ENCODE measurements at regions of chr17 and their contacts with region 1.

Region 1: GRCh38 chr17:40531051-40531991 is 29.9 kb upstream of the TNS4 start:
- DNase-seq: no peak
- H3K4me3 ChIP-seq: no peak overlapping the region
- H3K27ac ChIP-seq: no peak overlapping the region
- H3K4me1 ChIP-seq: peaks cover 28% of the 10 kb centered on the region
- H3K27me3 ChIP-seq: peaks cover 12 to 22% of the 10 kb centered on the region in 2 experiments
- CTCF ChIP-seq: no peak
- POLR2A ChIP-seq: no peak

Region 2: GRCh38 chr17:40303009-40303657 is 228.2 kb before region 1 on chr17:
- CTCF ChIA-PET with region 1: interaction called, 35 read pairs
- POLR2A ChIA-PET with region 1: no interaction called
- dilution Hi-C with region 1: no loop called
- intact Hi-C with region 1: loop called (anchors 5 kb)
- DNase-seq: peak; percentile 85
- H3K4me3 ChIP-seq: no peak overlapping the region
- H3K27ac ChIP-seq: no peak overlapping the region
- H3K4me1 ChIP-seq: peaks cover 19% of the 10 kb centered on the region
- H3K27me3 ChIP-seq: no peaks in the 10 kb centered on the region
- CTCF ChIP-seq: peak; percentile 55 to 66
- POLR2A ChIP-seq: no peak

Region 3: DNA sequence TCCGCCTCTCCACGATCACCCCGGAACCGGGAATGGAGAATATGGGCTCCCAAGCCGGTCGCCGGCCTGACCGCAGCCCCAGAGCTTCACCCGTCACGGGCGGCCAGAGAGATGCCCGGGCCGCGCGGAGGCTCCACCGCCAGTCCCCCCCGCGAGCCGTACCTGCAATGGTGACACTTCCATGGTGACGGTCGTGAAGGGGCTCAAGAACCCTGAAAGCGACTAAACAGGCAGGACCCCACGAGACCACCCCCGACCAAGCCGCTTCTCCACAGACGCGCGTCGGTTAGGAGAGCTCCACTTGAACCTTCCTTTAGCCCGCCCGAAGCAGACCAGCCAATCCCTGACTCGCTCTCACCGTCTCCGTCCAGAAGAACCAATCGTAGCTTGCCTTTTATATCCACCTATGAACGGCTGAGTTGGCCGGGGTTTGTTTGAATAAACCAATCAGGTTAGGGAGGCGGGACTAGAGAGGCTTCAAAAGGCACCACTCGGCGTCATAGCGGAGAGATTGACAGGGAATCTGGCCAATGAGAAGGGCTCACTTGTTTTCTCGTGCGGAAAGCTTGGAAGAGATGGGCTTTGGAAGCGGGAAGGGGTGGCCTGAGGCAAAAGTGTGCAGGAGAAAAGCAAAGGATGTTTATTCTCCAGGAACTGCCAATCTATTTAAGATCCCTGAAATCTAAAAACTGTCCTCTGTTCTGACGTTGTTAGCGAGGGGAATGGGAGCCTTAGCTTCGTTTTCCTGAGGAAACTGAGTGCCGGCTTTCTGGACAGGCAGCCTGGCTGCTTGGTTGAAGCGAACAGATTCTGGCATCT is 113.5 kb before region 1 on chr17 and contains the start of gene TOP2A:
- CTCF ChIA-PET with region 1: interaction called, 91 read pairs
- POLR2A ChIA-PET with region 1: interaction called, 4 read pairs
- dilution Hi-C with region 1: no loop called
- intact Hi-C with region 1: loop called (anchors 1 kb)
- DNase-seq: peak; percentile 100
- H3K4me3 ChIP-seq: peak within 1 kb of the TSS; percentile 72 to 91 (median 73)
- H3K27ac ChIP-seq: peak within 1 kb of the TSS; percentile 6
- H3K4me1 ChIP-seq: peaks cover 25% of the 10 kb centered on the region
- H3K27me3 ChIP-seq: no peaks in the 10 kb centered on the region
- CTCF ChIP-seq: no peak
- POLR2A ChIP-seq: peak; percentile 67
- total RNA-seq, gene TOP2A: 149 and 160 TPM in 2 replicates

Region 4: DNA sequence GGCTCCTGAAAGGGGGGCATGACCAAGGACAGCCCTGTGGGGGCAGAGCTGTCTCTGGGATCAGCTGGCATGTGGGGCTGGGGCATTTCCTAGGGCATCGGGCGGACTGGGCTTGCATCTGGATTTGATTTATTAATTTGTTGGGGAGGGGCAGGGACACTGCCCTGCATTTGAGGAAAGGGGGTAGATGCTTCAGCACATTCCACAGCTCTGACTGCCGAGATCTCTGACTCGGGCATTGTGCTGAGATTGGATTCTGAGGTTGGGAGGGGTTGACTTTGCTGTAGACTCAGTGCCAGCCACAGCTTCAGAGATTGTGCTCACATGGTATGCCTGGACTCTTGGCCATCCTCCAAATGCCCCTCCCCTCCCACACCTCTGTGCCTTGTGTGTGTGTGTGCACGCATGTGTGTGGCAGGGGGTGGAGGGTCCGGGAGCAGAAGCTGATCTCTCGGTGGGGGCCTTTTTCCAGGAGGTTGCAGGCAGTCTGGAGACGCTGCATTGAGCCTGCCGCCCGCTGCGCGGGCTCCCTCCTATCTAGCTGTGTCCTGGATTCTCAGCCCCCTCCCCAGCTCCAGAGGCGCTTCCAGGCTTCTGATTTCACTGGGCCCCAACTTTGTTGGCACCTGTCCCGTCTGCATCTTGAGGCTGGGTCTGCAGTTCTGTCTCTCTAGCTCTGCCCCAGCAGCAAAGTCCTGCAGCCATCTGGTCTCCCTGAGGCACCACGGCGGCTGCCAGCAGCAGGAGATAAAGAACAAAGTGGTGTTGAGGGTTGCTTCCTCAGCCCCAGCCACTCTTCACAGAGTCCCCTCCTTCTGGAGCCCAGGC is 73.1 kb before region 1 on chr17:
- CTCF ChIA-PET with region 1: interaction called, 11 read pairs
- POLR2A ChIA-PET with region 1: interaction called, 4 read pairs
- dilution Hi-C with region 1: no loop called
- intact Hi-C with region 1: no loop called
- DNase-seq: no peak
- H3K4me3 ChIP-seq: no peak overlapping the region
- H3K27ac ChIP-seq: no peak overlapping the region
- H3K4me1 ChIP-seq: no peaks in the 10 kb centered on the region
- H3K27me3 ChIP-seq: no peaks in the 10 kb centered on the region
- CTCF ChIP-seq: no peak
- POLR2A ChIP-seq: no peak

Region 5: GRCh38 chr17:40510328-40510648 is 21.0 kb before region 1 on chr17:
- CTCF ChIA-PET with region 1: interaction called, 21 read pairs
- POLR2A ChIA-PET with region 1: no interaction called
- dilution Hi-C with region 1: no loop called
- intact Hi-C with region 1: no loop called
- DNase-seq: no peak
- H3K4me3 ChIP-seq: no peak overlapping the region
- H3K27ac ChIP-seq: no peak overlapping the region
- H3K4me1 ChIP-seq: no peaks in the 10 kb centered on the region
- H3K27me3 ChIP-seq: peaks cover 0 to 18% of the 10 kb centered on the region in 2 experiments
- CTCF ChIP-seq: no peak
- POLR2A ChIP-seq: no peak

Region 6: DNA sequence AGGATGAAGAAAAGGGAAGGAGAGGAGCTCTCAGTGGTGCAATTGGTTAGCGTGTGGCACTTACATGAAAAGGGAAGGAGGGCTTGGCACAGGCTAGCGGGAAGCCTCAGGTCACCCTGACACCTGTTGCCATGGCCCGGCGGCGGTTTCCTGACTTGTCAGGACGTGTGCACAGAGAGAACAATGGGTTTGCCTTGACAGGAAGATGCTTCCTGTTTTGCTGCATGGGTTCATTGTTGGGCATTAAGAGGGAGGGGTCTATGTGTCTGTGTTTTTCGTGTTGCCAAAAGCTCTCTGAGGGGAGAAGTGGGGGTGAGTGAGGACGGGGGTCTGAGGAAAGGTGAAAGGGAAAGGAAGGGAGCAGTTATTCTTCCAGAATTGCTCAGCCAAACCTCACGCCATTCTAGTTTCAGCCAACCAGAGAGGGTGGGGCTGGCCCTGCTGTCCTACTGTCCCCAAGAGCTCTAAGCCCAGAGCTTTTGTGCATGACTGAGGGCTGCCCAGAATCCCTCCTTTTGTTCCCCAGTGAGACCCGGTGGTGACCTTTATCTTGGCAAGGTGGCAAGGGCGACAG is 51.1 kb after region 1 on chr17:
- CTCF ChIA-PET with region 1: interaction called, 5 read pairs
- POLR2A ChIA-PET with region 1: no interaction called
- dilution Hi-C with region 1: no loop called
- intact Hi-C with region 1: loop called (anchors 1 kb)
- DNase-seq: peak; percentile 97
- H3K4me3 ChIP-seq: no peak overlapping the region
- H3K27ac ChIP-seq: peak overlapping the region; percentile 74
- H3K4me1 ChIP-seq: peaks cover 18% of the 10 kb centered on the region
- H3K27me3 ChIP-seq: peaks cover 2 to 5% of the 10 kb centered on the region in 2 experiments
- CTCF ChIP-seq: no peak
- POLR2A ChIP-seq: no peak

Region 7: GRCh38 chr17:40763752-40764151 is 232.4 kb after region 1 on chr17:
- CTCF ChIA-PET with region 1: no interaction called
- POLR2A ChIA-PET with region 1: no interaction called
- dilution Hi-C with region 1: no loop called
- intact Hi-C with region 1: no loop called
- DNase-seq: no peak
- H3K4me3 ChIP-seq: no peak overlapping the region
- H3K27ac ChIP-seq: no peak overlapping the region
- H3K4me1 ChIP-seq: no peaks in the 10 kb centered on the region
- H3K27me3 ChIP-seq: peaks cover 2 to 5% of the 10 kb centered on the region in 2 experiments
- CTCF ChIP-seq: no peak
- POLR2A ChIP-seq: no peak

Measured in endothelial cell of umbilical vein (primary cell).